MCF 10A (cell line): ENCODE measurements at regions of chr7 and their contacts with region 1.

Region 1: GRCh38 chr7:42690794-42691639 is 220.9 kb downstream of the C7orf25 start:
- DNase-seq: peak; percentile 76
- H3K4me3 Mint-ChIP-seq: no peak overlapping the region
- H3K27ac Mint-ChIP-seq: peak overlapping the region; percentile 19
- H3K4me1 Mint-ChIP-seq: no peaks in the 10 kb centered on the region
- H3K27me3 Mint-ChIP-seq: no peaks in the 10 kb centered on the region
- CTCF ChIP-seq: peak; percentile 71

Region 2: DNA sequence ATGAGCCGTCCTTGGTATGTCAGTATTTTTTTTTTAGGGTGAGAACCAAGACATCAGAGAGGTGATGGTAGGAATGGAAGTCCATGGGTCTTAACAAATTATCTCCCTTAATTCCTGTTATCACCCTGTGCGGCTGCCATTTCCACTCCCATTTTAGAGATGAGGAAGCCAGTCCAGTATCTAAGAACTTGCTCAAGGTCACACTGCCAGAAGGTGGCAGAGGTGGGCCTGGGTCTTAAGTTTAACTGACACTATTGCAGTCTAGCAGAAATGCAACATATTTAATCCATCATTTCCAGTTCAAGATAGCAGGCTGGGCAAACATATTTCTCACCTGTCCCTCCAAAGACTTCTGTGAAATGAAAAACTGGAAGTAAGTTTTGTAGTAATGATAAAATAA is 562.3 kb before region 1 on chr7:
- CTCF ChIA-PET with region 1: interaction called, 9 read pairs
- POLR2A ChIA-PET with region 1: no interaction called
- intact Hi-C with region 1: loop called (anchors 5 kb)
- DNase-seq: peak; percentile 33
- H3K4me3 Mint-ChIP-seq: no peak overlapping the region
- H3K27ac Mint-ChIP-seq: no peak overlapping the region
- H3K4me1 Mint-ChIP-seq: peaks cover 8% of the 10 kb centered on the region
- H3K27me3 Mint-ChIP-seq: no peaks in the 10 kb centered on the region
- CTCF ChIP-seq: peak; percentile 27